AG04449 (cell line): ENCODE measurements at regions of chr21 and their contacts with region 1.

Region 1: DNA sequence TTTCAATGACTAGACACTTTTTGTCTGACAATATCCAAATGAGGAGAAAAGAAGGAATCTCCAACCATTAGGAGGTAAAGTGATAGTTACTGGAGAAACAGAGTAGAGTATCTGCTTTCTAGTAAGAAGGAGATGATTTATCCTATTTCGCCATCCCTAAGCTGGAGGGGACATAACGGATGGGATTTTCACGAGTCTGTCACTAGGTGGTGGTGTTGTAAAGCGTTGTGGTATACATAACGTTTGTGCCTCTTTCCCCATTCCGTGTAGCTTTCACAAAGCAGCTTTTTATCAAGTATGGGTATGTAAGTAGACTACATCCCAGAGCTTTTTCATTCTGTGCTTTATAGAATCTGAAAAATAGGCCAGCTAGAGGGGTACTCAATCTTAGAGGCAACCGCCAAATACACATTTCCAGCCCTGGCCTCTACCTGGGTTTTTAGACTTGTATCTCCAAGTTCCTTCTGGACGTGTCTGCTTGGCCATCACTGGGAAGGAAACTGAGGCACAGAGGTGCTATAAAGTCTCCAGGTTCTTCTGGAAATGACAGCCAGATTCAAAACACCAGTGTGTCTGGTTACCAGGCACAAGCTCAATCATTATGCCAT is 33.3 kb upstream of the FAM3B start:
- DNase-seq: peak; percentile 45
- H3K4me3 ChIP-seq: no peak overlapping the region
- CTCF ChIP-seq: peak; percentile 74

Region 2: GRCh38 chr21:41121785-41122421 is 161.4 kb before region 1 on chr21:
- CTCF ChIA-PET with region 1: interaction called, 45 read pairs
- POLR2A ChIA-PET with region 1: no interaction called
- DNase-seq: peak; percentile 29
- H3K4me3 ChIP-seq: no peak overlapping the region
- CTCF ChIP-seq: peak; percentile 92

Region 3: GRCh38 chr21:41219498-41220173 is 63.7 kb before region 1 on chr21:
- CTCF ChIA-PET with region 1: no interaction called
- POLR2A ChIA-PET with region 1: no interaction called
- DNase-seq: no peak
- H3K4me3 ChIP-seq: no peak overlapping the region
- CTCF ChIP-seq: no peak

Region 4: DNA sequence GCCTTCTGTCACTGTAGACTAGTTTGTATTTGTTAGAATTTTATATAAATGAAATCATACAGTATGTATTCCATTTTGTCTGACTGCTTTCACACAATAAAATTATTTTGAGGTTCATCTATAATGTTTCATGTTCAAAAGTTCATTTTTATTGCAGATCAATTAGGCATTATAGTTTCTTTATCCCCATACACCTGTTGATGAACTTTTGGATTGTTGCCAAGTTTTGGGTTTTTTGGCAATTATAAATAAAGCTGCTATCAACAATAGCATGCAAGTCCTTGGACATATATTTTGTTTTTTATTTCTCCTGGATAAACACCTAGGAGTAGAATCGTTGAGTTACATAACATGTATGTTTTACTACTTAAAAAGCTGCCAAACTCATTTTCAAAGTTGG is 13.8 kb before region 1 on chr21:
- CTCF ChIA-PET with region 1: interaction called, 35 read pairs
- POLR2A ChIA-PET with region 1: no interaction called
- DNase-seq: no peak
- H3K4me3 ChIP-seq: no peak overlapping the region
- CTCF ChIP-seq: no peak

Region 5: GRCh38 chr21:41460578-41461527 is 177.5 kb after region 1 on chr21:
- CTCF ChIA-PET with region 1: interaction called, 153 read pairs
- POLR2A ChIA-PET with region 1: no interaction called
- DNase-seq: no peak
- H3K4me3 ChIP-seq: no peak overlapping the region
- CTCF ChIP-seq: peak; percentile 91

Region 6: GRCh38 chr21:41601573-41602368 is 318.5 kb after region 1 on chr21:
- CTCF ChIA-PET with region 1: interaction called, 14 read pairs
- POLR2A ChIA-PET with region 1: no interaction called
- DNase-seq: no peak
- H3K4me3 ChIP-seq: no peak overlapping the region
- CTCF ChIP-seq: no peak

Region 7: DNA sequence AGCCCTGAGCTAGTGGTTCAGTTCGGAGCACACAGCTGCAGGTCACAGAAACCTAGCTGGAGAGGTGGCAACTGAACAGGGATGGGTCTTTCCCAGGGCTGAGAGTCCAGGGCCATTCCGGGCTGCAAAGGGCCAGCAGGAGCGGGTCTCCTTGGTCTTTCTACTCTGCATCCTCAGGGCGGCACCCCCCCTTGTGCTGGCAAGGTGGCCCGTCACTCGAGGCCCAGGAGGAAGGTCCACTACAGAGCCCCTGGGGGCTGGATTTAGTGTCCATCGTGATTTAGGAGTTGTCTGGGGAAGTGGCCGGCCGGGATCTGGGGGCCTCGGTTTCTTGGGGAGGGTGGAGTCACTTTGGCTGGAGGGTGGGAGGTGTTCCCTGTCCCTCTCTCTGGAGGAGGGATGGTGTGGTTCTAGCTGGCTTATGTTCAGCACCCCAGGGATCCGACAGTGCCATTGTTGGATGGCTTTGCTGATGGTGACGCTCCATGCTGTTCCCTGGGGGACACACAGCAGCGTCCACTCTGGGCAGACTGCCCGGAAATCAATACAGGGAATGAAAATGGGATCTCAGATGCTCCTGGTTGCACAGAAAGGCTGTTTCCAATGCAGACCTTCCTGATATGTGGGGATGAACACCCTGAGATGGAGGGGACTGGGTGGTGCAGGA is 852.2 kb after region 1 on chr21:
- CTCF ChIA-PET with region 1: no interaction called
- POLR2A ChIA-PET with region 1: no interaction called
- DNase-seq: no peak
- H3K4me3 ChIP-seq: no peak overlapping the region
- CTCF ChIP-seq: no peak